ENCODE measurements at regions of chr11 and their contacts with region 1.

Region 1: DNA sequence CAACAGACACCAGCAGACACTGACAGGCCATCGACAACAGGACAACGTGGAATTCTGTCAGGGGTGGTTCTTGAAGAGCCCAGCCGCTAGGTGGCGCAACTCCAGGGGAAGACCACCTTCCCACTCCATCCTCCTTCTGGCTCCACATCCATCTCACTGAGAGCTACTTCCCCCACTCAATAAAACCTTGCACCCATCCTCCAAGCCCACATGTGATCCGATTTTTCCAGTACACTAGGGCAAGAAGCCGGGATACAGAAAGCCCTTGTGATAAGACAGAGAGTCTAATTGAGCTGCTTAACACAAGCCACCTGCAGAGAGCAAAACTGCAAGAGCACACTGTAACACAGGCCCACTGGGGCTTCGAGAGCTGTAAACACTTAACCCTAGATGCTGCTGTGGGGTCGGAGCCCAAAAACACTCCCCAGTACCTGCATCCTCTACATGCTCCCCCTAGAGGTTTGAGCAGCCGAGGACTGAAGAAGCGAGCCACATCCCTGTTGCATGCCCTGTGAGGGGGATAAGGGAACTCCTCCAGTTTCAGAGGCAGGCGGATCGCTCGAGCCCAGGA is 11.5 kb upstream of the RAB39A start:
- DNase-seq: no peak
- H3K4me3 ChIP-seq: no peak overlapping the region
- H3K27ac ChIP-seq: no peak overlapping the region
- H3K27me3 ChIP-seq: no peaks in the 10 kb centered on the region
- CTCF ChIP-seq: peak; percentile 54

Region 2: DNA sequence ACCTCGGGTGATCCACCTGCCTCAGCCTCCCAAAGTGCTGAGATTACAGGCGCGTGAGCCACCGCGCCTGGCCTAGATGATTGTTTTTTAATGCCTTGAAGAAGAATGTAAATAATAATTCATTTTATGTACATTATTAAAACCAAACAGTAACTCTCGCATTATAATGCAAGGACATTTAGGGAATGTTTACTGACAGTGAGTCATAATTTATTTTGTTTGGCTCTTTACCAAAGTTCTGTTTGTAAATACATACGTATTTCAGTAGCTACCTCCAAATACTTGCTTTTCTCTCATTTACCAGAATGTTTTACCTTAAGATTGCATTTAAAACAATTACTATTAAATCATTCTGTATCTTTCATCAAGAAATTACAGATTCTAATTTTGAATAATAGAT is 14.4 kb after region 1 on chr11:
- CTCF ChIA-PET with region 1: interaction called, 16 read pairs
- POLR2A ChIA-PET with region 1: no interaction called
- DNase-seq: no peak
- H3K4me3 ChIP-seq: no peak overlapping the region
- H3K27ac ChIP-seq: no peak overlapping the region
- H3K27me3 ChIP-seq: peaks cover 11% of the 10 kb centered on the region
- CTCF ChIP-seq: no peak

Region 3: GRCh38 chr11:107957109-107957588 is 40.4 kb after region 1 on chr11:
- CTCF ChIA-PET with region 1: no interaction called
- POLR2A ChIA-PET with region 1: no interaction called
- DNase-seq: no peak
- H3K4me3 ChIP-seq: no peak overlapping the region
- H3K27ac ChIP-seq: no peak overlapping the region
- H3K27me3 ChIP-seq: no peaks in the 10 kb centered on the region
- CTCF ChIP-seq: no peak